OCI-LY7 (cell line): ENCODE measurements at regions of chr7 and their contacts with region 1.

Region 1: GRCh38 chr7:1086588-1087464 is 1.1 kb upstream of the GPER1 start:
- DNase-seq: peak; percentile 94
- H3K4me3 ChIP-seq: peak overlapping the region; percentile 76
- H3K27ac ChIP-seq: peak overlapping the region; percentile 91
- H3K4me1 ChIP-seq: peaks cover 49% of the 10 kb centered on the region
- CTCF ChIP-seq: peak; percentile 94

Region 2: GRCh38 chr7:992709-993607 is 93.9 kb before region 1 on chr7:
- CTCF ChIA-PET with region 1: no interaction called
- POLR2A ChIA-PET with region 1: no interaction called
- intact Hi-C with region 1: loop called (anchors 1 kb)
- DNase-seq: peak; percentile 95
- H3K4me3 ChIP-seq: no peak overlapping the region
- H3K27ac ChIP-seq: no peak overlapping the region
- H3K4me1 ChIP-seq: peaks cover 43% of the 10 kb centered on the region
- CTCF ChIP-seq: peak; percentile 99

Region 3: GRCh38 chr7:1059200-1060091 is 27.4 kb before region 1 on chr7:
- CTCF ChIA-PET with region 1: interaction called, 3 read pairs
- POLR2A ChIA-PET with region 1: interaction called, 10 read pairs
- intact Hi-C with region 1: no loop called
- DNase-seq: peak; percentile 91
- H3K4me3 ChIP-seq: peak overlapping the region; percentile 48
- H3K27ac ChIP-seq: peak overlapping the region; percentile 89
- H3K4me1 ChIP-seq: peaks cover 71% of the 10 kb centered on the region
- CTCF ChIP-seq: no peak

Region 4: DNA sequence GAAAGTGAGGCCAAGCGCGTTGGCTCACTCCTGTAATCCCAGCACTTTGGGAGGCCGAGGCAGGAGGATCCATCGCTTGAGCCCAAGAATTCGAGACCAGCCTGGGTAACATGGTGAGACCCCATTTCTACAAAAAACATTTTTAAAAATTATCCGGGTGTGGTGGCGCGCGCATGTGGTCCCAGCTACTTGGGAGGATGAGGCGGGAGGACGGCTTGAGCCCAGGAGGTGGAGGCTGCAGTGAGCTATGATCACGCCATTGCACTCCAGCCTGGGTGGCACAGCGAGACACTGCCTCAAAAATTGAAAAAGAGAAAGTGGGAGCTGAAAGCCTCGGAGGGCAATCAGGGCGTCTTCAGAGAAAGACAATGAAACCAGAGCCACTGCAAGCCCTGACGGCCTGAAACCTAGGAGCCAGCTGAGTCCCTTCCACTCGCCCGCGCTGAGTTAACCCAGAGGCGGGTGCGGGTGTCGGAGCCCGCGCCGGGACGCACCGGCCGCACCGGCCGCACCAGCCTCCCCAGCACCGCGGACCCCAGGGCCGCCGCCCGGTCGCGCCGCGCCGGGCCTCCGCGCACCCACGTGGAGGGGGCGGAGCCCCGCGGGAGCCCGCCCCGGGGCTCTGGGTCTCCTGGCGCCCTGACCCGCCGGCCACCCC is 50.8 kb after region 1 on chr7:
- CTCF ChIA-PET with region 1: interaction called, 6 read pairs
- POLR2A ChIA-PET with region 1: interaction called, 13 read pairs
- intact Hi-C with region 1: loop called (anchors 1 kb)
- DNase-seq: no peak
- H3K4me3 ChIP-seq: peak overlapping the region; percentile 71
- H3K27ac ChIP-seq: peak overlapping the region; percentile 56
- H3K4me1 ChIP-seq: peaks cover 28% of the 10 kb centered on the region
- CTCF ChIP-seq: no peak

Region 5: GRCh38 chr7:1175967-1176851 is 89.4 kb after region 1 on chr7:
- CTCF ChIA-PET with region 1: interaction called, 7 read pairs
- POLR2A ChIA-PET with region 1: interaction called, 3 read pairs
- intact Hi-C with region 1: loop called (anchors 1 kb)
- DNase-seq: peak; percentile 83
- H3K4me3 ChIP-seq: peak overlapping the region; percentile 33
- H3K27ac ChIP-seq: no peak overlapping the region
- H3K4me1 ChIP-seq: peaks cover 12% of the 10 kb centered on the region
- CTCF ChIP-seq: peak; percentile 91